ENCODE measurements at regions of chr4 and their contacts with region 1.

Region 1: DNA sequence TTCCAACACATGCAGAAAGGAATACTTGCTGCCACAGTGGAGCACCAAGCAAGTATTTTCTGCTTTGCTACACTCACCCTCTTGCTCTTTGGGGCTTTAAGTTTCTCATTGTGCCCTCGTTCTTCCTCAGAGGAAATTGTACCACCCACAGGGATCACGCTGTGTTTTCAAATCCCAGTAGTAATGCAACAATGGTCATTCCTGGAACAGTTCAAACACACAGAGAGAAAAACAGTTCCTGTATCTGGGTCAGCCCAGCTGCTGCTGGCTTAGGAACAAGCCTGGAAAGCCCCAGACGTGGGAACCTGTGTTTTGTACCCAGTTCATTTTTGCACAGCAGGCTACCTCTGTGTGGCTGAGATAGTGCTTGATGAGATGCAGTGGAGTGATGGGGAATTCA is 907.8 kb downstream of the STPG2 start:
- DNase-seq: no peak
- H3K4me3 ChIP-seq: no peak overlapping the region
- CTCF ChIP-seq: no peak
- POLR2A ChIP-seq: no peak

Region 2: DNA sequence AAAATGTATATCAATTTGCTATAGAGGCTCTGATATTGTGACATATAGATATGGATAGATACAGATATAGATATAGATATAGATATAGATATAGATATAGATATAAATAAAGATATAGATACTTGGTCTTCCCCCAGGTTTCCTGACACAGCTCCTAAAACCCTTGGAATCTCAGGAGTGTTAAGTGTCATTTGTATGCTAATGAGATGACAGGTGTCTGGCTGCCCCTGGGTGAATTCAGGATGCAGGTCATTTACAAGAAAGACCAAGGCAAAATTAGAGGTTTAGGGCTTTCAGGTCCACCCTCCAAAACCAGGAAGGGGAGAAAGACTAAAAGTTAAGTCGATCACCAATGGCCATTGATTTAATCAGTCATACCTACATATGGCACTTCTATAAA is 360.9 kb before region 1 on chr4:
- intact Hi-C with region 1: no loop called
- DNase-seq: no peak
- H3K4me3 ChIP-seq: no peak overlapping the region
- CTCF ChIP-seq: no peak
- POLR2A ChIP-seq: no peak

Region 3: DNA sequence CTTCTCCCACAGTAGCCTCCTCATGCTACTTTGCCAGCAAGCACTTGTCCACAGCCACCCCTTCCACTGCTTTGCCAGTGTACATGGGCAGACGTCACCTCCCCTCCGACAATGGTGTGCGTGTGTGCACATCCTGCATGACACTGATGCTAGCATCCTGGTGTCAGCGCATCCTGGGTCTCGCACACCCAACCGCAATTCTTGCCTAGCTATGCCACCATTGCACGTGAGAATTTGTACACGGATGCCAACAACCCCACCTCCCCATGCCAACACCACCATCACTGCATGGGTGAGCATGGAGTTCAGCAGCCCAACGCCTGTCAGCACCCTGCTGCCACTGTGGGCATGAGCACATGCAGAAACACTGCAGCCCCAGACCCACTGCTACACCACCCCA is 357.7 kb after region 1 on chr4:
- intact Hi-C with region 1: loop called (anchors 5 kb)
- DNase-seq: no peak
- H3K4me3 ChIP-seq: no peak overlapping the region
- CTCF ChIP-seq: no peak
- POLR2A ChIP-seq: no peak

Region 4: DNA sequence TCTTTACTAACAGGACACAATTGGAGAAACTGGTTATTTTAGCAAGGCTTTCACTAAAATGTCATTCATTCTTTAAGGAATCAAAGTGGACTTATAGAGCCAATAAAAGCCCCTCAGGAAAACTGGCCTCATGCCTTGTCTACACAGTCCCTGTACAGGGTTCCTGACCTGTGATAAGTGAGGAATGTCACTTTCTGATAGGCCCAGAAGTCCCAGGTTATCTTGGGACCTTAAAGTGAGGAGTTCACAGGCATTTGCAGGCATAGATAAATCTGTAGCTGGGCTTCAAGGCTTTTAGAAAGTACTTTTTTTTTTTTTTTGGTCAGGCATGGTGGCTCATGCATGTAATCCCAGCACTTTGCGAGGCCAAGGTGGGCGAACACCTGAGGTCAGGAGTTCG is 927.2 kb after region 1 on chr4:
- intact Hi-C with region 1: no loop called
- DNase-seq: no peak
- H3K4me3 ChIP-seq: no peak overlapping the region
- CTCF ChIP-seq: no peak
- POLR2A ChIP-seq: no peak